Psoas muscle (tissue), 8 donors: ENCODE measurements at regions of chr3 and their contacts with region 1.

Region 1: DNA sequence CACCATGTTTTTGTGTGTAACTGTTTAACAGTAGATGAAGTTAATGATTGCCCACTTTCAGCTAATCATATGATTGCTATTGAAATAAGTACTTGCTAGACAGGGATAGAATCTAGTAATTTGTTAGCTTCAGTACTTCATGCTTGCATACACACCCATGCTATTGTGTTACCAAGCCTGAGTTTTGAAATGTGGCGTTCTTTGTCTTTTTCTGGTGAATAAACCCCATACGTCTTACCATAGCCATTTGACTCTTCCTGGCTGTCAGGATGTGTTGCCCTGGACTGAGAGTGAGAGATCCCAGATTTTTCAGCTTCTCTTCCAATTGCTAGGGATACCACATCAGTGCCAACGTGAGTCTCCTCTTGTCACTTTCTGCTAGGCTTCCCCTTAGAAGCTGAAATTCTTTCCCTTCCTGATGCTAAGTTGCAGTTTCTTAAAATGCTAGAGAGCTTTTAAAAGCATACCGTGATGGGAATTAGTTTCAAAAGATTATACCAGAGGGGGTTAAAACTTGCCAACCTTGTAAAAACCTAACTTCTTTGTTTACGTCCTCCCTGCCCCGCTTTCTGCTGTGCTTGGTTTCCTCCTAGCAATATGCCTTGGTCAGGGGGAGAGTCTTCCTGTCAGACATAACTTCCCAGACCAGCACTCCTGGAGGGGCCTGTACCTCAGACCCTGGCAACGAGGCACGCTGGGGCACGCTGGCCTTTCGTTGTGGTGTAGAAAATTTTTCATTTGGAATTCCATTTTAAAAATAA is 62.9 kb upstream of the ULK4 start:
- DNase-seq: no peak
- ATAC-seq: peak in 2 of 4 donors; percentile 31 to 37
- H3K4me3 ChIP-seq: peak overlapping the region; percentile 31
- H3K27ac ChIP-seq: peak overlapping the region; percentile 85
- H3K4me1 ChIP-seq: peaks cover 76% of the 10 kb centered on the region
- H3K27me3 ChIP-seq: no peaks in the 10 kb centered on the region
- CTCF ChIP-seq: no peak

Region 2: DNA sequence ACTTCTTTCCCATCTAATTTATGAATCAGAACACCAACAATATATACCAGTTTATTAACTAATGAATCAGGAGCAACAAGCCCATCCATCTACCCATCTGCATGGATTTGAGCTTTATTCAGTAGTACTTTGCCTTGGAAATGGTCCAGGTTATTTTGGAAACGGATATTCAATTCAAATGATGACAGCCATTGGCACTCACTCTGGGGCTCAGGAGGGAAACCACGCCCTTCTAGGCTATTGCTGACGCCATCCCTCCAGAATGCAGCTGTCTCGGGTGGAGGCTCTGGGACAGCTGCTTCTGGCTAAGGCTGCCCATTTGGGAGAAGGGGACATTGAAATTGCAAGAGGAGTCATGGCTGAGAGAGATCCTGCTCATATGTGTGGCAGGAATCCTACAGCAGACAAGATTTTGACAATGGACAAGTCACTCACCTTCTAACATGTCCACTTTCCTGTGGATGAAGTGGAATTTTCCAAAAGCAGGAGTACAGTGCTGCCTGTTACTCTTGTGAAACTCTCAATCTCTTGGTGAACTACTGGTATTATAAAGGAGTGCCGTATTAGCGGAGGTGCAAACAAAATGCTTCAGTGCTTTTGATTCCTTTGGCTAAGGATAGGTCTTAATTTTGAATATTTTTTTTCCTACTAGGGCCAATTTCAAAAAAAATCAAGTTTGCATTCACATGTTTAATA is 37.1 kb after region 1 on chr3:
- intact Hi-C with region 1: loop called in 1 of 2 experiments (anchors 5 kb)
- DNase-seq: peak; percentile 85 to 92
- ATAC-seq: peak; percentile 95 to 97 (median 96)
- H3K4me3 ChIP-seq: peak overlapping the region; percentile 48
- H3K27ac ChIP-seq: peak overlapping the region; percentile 94
- H3K4me1 ChIP-seq: peaks cover 48% of the 10 kb centered on the region
- H3K27me3 ChIP-seq: no peaks in the 10 kb centered on the region
- CTCF ChIP-seq: no peak

Region 3: GRCh38 chr3:42071904-42072592 is 47.3 kb after region 1 on chr3:
- intact Hi-C with region 1: loop called in 1 of 2 experiments (anchors 5 kb)
- DNase-seq: peak; percentile 74 to 87
- ATAC-seq: peak; percentile 80 to 88 (median 85)
- H3K4me3 ChIP-seq: peak overlapping the region; percentile 59
- H3K27ac ChIP-seq: peak overlapping the region; percentile 95
- H3K4me1 ChIP-seq: peaks cover 76% of the 10 kb centered on the region
- H3K27me3 ChIP-seq: no peaks in the 10 kb centered on the region
- CTCF ChIP-seq: no peak